Activated CD8-positive, alpha-beta T cell treated with anti-CD3 and anti-CD28 coated beads, Interleukin-2, amount 10 ng/mL, durations not matched to agents 7 days and 5 days (primary cell): ENCODE measurements at regions of chr18 and their contacts with region 1.

Region 1: DNA sequence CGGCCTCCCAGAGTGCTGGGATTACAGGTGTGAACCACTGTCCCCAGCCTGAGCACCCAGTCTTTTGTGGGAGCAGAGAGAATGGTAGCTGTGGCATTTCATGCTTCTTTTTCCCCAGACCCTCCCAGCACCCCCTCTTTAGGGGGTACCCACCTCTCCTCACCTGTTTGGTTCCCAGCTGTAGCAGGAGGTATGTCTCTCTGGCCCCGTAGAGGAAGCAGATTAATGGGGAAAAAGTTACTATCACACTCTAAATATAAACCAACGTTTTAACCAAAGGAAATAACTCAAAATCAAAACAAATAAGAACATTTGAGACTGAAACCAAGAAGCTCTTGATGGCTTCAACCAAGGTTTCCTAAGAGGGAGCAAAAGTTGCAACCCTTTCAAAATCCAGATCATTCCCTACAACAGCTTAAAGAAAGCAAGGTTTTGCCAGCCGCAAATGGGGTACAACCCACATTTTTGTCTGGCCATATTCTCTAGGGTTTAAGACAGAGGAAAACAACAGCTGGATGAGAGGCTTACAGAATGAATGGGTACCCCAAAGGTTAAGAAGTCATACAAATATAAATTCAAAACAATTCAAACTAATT is 8.0 kb downstream of the RNF125 start:
- DNase-seq: no peak
- ATAC-seq: peak; percentile 66
- H3K4me3 Mint-ChIP-seq: peak overlapping the region; percentile 73
- H3K27ac Mint-ChIP-seq: peak overlapping the region; percentile 85
- H3K4me1 Mint-ChIP-seq: peaks cover 83% of the 10 kb centered on the region
- H3K27me3 Mint-ChIP-seq: no peaks in the 10 kb centered on the region

Region 2: GRCh38 chr18:32040936-32041335 is 14.3 kb after region 1 on chr18:
- CTCF ChIA-PET with region 1: interaction called, 8 read pairs
- POLR2A ChIA-PET with region 1: interaction called, 14 read pairs
- DNase-seq: peak; percentile 82
- ATAC-seq: peak; percentile 90
- H3K4me3 Mint-ChIP-seq: peak overlapping the region; percentile 65
- H3K27ac Mint-ChIP-seq: peak overlapping the region; percentile 89
- H3K4me1 Mint-ChIP-seq: peaks cover 66% of the 10 kb centered on the region
- H3K27me3 Mint-ChIP-seq: no peaks in the 10 kb centered on the region